HEK293 (cell line): ENCODE measurements at regions of chr22 and their contacts with region 1.

Region 1: GRCh38 chr22:37824674-37825641 is 1.8 kb downstream of the GALR3 start:
- H3K4me3 ChIP-seq: no peak overlapping the region
- H3K27ac ChIP-seq: no peak overlapping the region
- H3K4me1 ChIP-seq: no peaks in the 10 kb centered on the region
- CTCF ChIP-seq: no peak

Region 2: DNA sequence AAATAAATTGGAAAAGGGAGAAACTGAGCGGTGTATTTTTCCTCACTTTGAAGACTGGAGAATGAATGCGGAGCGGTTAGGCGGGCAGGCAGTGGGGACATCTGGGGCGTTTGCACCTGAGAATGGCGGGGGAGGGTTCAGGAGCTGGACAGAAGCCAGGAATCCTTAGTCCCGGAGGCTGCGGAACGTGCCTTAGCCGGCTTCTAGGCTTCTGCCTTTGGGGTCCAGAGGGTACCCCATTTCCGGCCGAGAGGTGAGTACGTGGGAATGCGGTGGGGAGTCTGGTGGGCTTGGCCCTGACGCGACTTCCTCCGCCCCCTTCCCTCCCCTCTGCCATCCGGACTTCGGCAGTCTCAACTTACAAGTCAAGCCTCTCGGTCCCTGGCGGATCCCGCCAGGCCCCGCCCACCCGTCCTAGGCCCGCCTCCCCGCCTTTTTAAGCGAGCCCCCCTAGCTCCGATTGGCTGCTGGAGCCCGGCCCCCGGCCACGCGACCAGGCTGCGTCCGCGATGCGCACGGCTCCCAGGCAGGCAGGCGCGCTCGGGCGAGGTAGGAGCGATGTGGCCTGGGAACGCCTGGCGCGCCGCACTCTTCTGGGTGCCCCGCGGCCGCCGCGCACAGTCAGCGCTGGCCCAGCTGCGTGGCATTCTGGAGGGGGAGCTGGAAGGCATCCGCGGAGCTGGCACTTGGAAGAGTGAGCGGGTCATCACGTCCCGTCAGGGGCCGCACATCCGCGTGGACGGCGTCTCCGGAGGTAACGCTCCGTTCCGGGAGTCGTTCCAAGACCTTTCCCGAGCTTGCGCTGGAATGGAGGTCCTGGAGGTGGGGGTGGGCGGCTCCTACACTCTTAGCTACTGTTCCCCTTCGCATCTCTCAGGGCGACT is 17.3 kb before region 1 on chr22 and contains the start of gene GCAT:
- CTCF ChIA-PET with region 1: interaction called, 4 read pairs
- POLR2A ChIA-PET with region 1: interaction called, 12 read pairs
- H3K4me3 ChIP-seq: peak within 1 kb of the TSS; percentile 68
- H3K27ac ChIP-seq: peak within 1 kb of the TSS; percentile 45; the same call in 1 of the 2 replicates
- H3K4me1 ChIP-seq: peaks cover 6% of the 10 kb centered on the region; the same call in 1 of the 2 replicates
- CTCF ChIP-seq: no peak